ENCODE measurements at regions of chr20 and their contacts with region 1.

Region 1: GRCh38 chr20:10090588-10091166 is 55.9 kb downstream of the ANKEF1 start:
- DNase-seq: peak; percentile 33
- ATAC-seq: peak; percentile 78 to 89

Region 2: GRCh38 chr20:9978397-9979004 is 112.2 kb before region 1 on chr20:
- intact Hi-C with region 1: loop called (anchors 2 to 5 kb)
- DNase-seq: no peak
- ATAC-seq: peak; percentile 91 to 97

Region 3: GRCh38 chr20:10171864-10172751 is 81.4 kb after region 1 on chr20:
- intact Hi-C with region 1: loop called in 1 of 2 experiments (anchors 10 kb)
- DNase-seq: peak; percentile 45
- ATAC-seq: peak; percentile 78 to 90

Region 4: DNA sequence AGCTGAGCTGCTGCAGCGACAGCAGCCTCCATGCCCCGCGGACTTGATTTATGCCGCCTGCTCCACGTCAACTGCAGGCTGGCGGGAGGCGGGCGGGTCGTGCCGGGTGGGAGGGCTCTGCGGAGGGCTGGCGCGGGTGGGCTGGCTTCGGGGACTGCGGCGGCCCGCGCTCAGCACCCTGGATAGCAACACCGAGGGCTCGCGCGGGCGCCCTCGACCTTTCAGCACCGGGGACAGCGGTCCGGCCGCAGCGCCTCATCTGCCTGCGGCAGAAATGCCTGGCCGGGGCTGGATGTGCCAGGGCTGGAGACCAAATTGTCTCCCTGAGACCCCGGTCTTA is 128.7 kb after region 1 on chr20:
- intact Hi-C with region 1: loop called in 1 of 2 experiments (anchors 5 kb)
- DNase-seq: peak; percentile 81
- ATAC-seq: peak; percentile 82 to 85

Region 5: DNA sequence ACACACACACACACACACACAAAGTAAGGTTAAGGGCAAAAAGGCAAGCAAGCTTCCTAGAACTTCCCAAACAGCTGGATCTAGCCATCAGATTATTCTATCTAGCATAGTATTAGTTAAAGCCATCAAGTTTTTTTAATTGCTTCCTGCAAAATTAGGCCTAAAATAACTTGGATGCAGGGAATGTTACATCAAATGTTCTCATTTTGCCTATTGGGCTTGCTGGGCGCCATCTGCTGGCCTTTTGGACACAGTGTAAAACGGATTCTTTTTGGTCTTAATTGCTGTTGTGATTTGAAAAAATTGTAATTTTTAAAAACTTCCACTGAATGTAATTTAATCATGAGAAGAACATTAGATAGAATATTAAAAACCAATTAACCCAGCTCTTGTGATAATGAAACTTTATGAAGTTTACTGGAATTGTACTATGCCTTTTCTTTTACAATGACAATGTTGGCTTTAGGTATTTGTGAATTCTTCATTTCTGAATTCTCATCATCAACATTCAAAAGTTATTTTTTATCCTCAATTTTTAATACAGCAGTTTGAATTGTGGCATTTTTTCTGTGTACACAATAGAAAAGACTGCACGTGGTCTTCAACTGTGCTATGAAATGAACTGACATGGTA is 336.5 kb after region 1 on chr20:
- intact Hi-C with region 1: loop called in 1 of 2 experiments (anchors 10 kb)
- DNase-seq: peak; percentile 64
- ATAC-seq: peak; percentile 46 to 55

Region 6: GRCh38 chr20:10793766-10794165 is 703.1 kb after region 1 on chr20:
- intact Hi-C with region 1: no loop called
- DNase-seq: no peak
- ATAC-seq: no peak

Measured in left cardiac atrium (tissue), 4 donors.